Heart right ventricle (tissue), 16 donors: ENCODE measurements at regions of chr2 and their contacts with region 1.

Region 1: DNA sequence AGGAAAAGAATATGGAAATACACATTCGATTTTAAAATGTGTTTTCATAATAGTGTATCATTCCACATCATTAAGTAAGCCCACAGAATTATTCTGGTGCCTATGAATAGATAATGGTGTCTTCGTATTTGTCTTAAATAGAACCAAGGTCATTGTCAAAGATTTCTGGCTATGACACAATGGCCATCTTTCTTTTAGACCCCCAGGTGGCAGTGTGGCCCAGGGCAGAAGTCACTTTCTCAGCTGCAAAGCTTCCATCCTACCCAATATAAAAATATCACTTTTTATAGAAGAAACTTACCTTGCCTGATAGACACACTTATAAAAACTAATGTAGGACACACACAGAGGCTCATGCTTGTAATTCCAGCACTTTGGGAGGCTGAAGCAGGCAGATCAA is 57.5 kb downstream of the ZRANB3 start:
- DNase-seq: no peak
- ATAC-seq: no peak
- H3K4me3 ChIP-seq: no peak overlapping the region
- H3K27ac ChIP-seq: no peak overlapping the region
- H3K4me1 ChIP-seq: no peaks in the 10 kb centered on the region
- H3K27me3 ChIP-seq: no peaks in the 10 kb centered on the region
- CTCF ChIP-seq: peak in 8 of 9 donors; percentile 28 to 60 (median 56)

Region 2: DNA sequence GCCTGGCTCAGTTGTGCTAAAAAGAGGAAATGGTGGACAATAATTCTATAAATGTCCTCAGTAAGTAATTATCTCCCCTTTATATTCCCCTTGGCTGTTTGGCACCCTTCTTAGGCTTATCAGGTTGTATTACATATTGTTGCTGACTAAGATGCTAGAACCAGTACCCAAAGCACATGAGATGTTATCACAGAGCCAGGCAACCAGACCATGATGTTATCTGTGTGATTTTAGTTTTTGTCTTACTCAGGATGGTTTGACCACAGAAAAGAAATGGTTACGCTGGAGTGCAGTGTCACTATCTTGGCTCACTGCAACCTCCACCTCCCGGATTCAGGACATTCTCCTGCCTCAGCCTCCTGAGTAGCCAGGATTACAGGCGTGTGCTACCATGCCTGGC is 72.9 kb after region 1 on chr2:
- intact Hi-C with region 1: no loop called
- DNase-seq: no peak
- ATAC-seq: no peak
- H3K4me3 ChIP-seq: no peak overlapping the region
- H3K27ac ChIP-seq: no peak overlapping the region
- H3K4me1 ChIP-seq: no peaks in the 10 kb centered on the region
- H3K27me3 ChIP-seq: no peaks in the 10 kb centered on the region
- CTCF ChIP-seq: no peak

Region 3: GRCh38 chr2:135600915-135601314 is 127.3 kb after region 1 on chr2:
- intact Hi-C with region 1: loop called in 1 of 10 experiments (anchors 10 kb)
- DNase-seq: no peak
- ATAC-seq: no peak
- H3K4me3 ChIP-seq: no peak overlapping the region
- H3K27ac ChIP-seq: no peak overlapping the region
- H3K4me1 ChIP-seq: no peaks in the 10 kb centered on the region
- H3K27me3 ChIP-seq: no peaks in the 10 kb centered on the region
- CTCF ChIP-seq: peak in 5 of 9 donors; percentile 26 to 41 (median 37)